ENCODE measurements at regions of chr1 and their contacts with region 1.

Region 1: GRCh38 chr1:24847995-24848881 is 81.8 kb downstream of the RUNX3 start:
- ATAC-seq: peak; percentile 87 to 94 (median 92)
- H3K4me3 ChIP-seq: peak overlapping the region; percentile 24 to 43 (median 33)
- H3K27ac ChIP-seq: no peak overlapping the region
- H3K4me1 ChIP-seq: no peaks in the 10 kb centered on the region

Region 2: GRCh38 chr1:24659993-24660665 is 188.1 kb before region 1 on chr1:
- in situ Hi-C with region 1: no loop called
- ATAC-seq: peak in 2 of 8 experiments; percentile 33 to 35
- H3K4me3 ChIP-seq: no peak overlapping the region
- H3K27ac ChIP-seq: no peak overlapping the region
- H3K4me1 ChIP-seq: no peaks in the 10 kb centered on the region

Region 3: DNA sequence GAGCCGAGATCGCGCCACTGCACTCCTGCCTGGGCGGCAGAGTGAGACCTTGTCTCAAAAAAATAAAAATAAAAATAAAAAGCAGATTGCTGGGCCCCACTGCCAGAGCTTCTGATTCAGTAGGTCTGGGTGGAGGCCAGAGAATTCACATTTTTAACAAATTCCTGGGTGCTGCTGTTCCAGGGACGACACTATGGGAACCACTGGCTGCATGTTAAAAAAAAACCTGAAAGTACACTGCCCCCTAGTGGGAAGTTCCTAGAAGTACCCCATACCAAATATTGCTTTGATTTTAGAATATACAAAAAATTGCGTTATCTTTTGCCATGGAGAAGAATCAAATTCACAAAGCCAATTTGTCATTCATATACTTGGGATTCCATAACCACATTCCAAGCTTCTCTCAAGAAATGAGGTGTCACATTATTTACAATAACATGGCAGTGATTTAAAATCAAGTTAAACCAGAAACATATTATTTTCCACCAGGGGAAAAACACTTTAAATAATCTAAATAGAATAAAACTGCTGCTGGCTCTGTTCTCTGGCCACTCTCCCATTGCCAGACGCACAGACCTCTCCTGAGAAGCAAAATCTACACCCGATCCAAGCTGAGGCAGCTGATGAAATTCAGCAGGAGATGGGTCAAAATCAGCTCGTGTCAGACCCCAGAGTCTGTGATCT is 356.7 kb after region 1 on chr1:
- in situ Hi-C with region 1: loop called in 1 of 9 experiments (anchors 25 kb)
- ATAC-seq: peak in 7 of 8 experiments; percentile 30 to 80 (median 44)
- H3K4me3 ChIP-seq: no peak overlapping the region
- H3K27ac ChIP-seq: no peak overlapping the region
- H3K4me1 ChIP-seq: peaks cover 5 to 10% of the 10 kb centered on the region in 2 donors

Measured in motor neuron (in vitro differentiated cells).